Dorsolateral prefrontal cortex (tissue), 120 donors: ENCODE measurements at regions of chr2 and their contacts with region 1.

Region 1: GRCh38 chr2:171999604-172000469 is at the start of gene METAP1D:
- DNase-seq: peak; percentile 82 to 98 (median 92)
- H3K4me3 ChIP-seq: peak within 1 kb of the TSS; percentile 57 to 97 (median 82)
- H3K27ac ChIP-seq: peak within 1 kb of the TSS in 57 of 59 donors; percentile 11 to 93 (median 81)
- H3K27me3 ChIP-seq: no peaks in the 10 kb centered on the region
- CTCF ChIP-seq: peak in 33 of 56 donors; percentile 5 to 62 (median 25)
- total RNA-seq, gene METAP1D: 5.8 to 17.9 (median 9.4) TPM

Region 2: GRCh38 chr2:171893824-171894611 is 105.8 kb before region 1 on chr2 and contains the start of gene SLC25A12:
- intact Hi-C with region 1: loop called in 1 of 2 experiments (anchors 2 kb)
- DNase-seq: peak; percentile 56 to 86 (median 76)
- H3K4me3 ChIP-seq: peak within 1 kb of the TSS; percentile 67 to 97 (median 86)
- H3K27ac ChIP-seq: peak within 1 kb of the TSS in 56 of 59 donors; percentile 3 to 92 (median 75)
- H3K27me3 ChIP-seq: no peaks in the 10 kb centered on the region
- CTCF ChIP-seq: peak in 11 of 56 donors; percentile 11 to 36 (median 17)
- total RNA-seq, gene SLC25A12: 37.2 to 159 (median 105) TPM

Region 3: DNA sequence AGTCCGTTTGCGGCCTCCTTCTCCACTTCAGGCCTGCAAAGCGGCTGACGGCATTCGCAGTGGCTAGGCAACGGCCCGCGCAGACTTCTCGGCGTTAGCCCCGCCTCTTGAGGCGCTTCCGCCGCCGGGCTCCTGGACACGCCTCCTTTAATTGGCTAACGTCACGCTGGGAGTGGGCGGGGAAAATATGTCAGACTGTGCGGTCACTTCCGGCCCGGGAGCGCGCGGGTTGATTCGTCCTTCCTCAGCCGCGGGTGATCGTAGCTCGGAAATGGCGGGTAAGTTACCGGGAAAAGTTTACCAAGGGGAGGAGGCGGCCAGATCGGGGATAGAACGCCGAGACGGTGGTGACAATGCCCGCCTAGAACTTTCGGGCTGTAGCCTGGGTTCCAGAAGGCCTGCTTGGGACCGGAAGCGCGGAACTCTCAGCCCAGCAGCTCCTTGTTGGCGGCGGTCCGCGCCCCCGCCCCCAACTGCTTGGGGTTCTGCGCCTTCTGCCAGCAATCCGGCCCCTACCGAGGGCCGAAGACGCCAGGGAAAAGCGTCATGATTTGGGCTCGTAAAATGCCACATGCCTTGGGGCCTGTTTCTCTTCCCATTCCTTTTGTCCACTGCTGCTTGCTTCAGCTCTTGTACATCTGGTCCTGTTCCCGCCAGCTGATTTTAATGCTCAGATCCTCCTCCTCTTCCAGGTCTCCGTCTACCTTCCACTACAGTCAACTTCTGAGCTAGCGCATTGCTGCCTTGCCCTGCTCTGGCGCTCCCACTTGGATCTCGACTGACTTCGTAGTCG is 77.4 kb before region 1 on chr2 and contains the start of gene HAT1:
- intact Hi-C with region 1: loop called (anchors 1 to 10 kb)
- DNase-seq: peak; percentile 95 to 99 (median 98)
- H3K4me3 ChIP-seq: peak within 1 kb of the TSS; percentile 56 to 99 (median 89)
- H3K27ac ChIP-seq: peak within 1 kb of the TSS; percentile 41 to 95 (median 88)
- H3K27me3 ChIP-seq: no peaks in the 10 kb centered on the region
- CTCF ChIP-seq: peak in 19 of 56 donors; percentile 5 to 42 (median 20)
- total RNA-seq, gene HAT1: 13.9 to 33.5 (median 22.1) TPM

Region 4: GRCh38 chr2:172095146-172095904 is 95.5 kb after region 1 on chr2:
- intact Hi-C with region 1: loop called (anchors 5 kb)
- DNase-seq: peak in 3 of 10 donors; percentile 33 to 41 (median 37)
- H3K4me3 ChIP-seq: peak overlapping the region in 58 of 59 donors; percentile 11 to 73 (median 45)
- H3K27ac ChIP-seq: peak overlapping the region in 21 of 59 donors; percentile 11 to 65 (median 38)
- H3K27me3 ChIP-seq: peaks cover 22 to 100% (median 100%) of the 10 kb centered on the region in 45 donors
- CTCF ChIP-seq: no peak

Region 5: GRCh38 chr2:172153156-172153555 is 153.3 kb after region 1 on chr2:
- intact Hi-C with region 1: no loop called
- DNase-seq: no peak
- H3K4me3 ChIP-seq: no peak overlapping the region
- H3K27ac ChIP-seq: no peak overlapping the region
- H3K27me3 ChIP-seq: peaks cover 0 to 27% (median 2%) of the 10 kb centered on the region in 45 donors
- CTCF ChIP-seq: no peak